Heart left ventricle (tissue), 16 donors: ENCODE measurements at regions of chr1 and their contacts with region 1.

Region 1: DNA sequence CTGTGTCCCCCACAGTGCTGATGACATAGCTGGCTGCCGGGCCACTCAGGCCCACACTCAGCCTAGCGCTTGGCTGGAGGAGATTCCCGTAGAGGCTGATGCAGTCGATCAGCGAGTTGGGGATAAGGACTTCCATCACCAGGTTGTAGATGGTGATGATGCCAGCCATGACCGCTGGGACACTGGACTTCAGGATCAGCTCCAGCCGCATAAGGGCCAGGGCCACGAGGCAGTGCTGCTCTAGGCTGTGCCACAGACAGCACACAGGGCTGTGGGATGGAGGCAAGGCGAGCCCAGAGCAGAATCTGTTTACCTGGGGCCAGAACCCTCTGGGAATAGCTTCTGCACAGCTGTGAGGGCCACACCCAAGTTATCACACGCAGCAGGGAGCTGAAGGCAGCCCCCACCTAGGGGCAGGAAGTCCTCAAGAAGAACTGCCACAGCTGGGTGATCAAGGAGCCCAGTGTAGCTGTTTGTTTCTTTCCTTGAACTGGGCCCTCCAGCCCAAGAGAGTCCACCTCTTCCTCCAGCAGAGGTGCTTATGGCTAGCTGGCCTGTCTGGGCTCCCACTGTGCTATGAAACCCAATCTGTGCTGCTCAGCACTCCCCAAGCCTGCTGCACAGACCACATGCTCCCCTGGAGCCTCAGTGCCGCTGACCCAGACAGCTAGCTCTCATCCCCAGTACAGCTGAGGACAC is 6.2 kb downstream of the SLC2A1 start:
- DNase-seq: no peak
- ATAC-seq: no peak
- H3K4me3 ChIP-seq: peak overlapping the region in 1 of 12 donors; percentile 9
- H3K27ac ChIP-seq: peak overlapping the region in 7 of 12 donors; percentile 9 to 78 (median 42)
- H3K4me1 ChIP-seq: peaks cover 0 to 78% (median 29%) of the 10 kb centered on the region in 12 donors
- H3K27me3 ChIP-seq: no peaks in the 10 kb centered on the region
- CTCF ChIP-seq: no peak
- POLR2A ChIP-seq: no peak

Region 2: GRCh38 chr1:42929434-42930195 is 22.8 kb before region 1 on chr1:
- intact Hi-C with region 1: loop called in 2 of 10 experiments (anchors 2 to 5 kb)
- DNase-seq: no peak
- ATAC-seq: no peak
- H3K4me3 ChIP-seq: no peak overlapping the region
- H3K27ac ChIP-seq: no peak overlapping the region
- H3K4me1 ChIP-seq: peaks cover 0 to 46% (median 6%) of the 10 kb centered on the region in 12 donors
- H3K27me3 ChIP-seq: no peaks in the 10 kb centered on the region
- CTCF ChIP-seq: no peak
- POLR2A ChIP-seq: no peak

Region 3: GRCh38 chr1:43035821-43036741 is 83.6 kb after region 1 on chr1:
- intact Hi-C with region 1: no loop called
- DNase-seq: no peak
- ATAC-seq: no peak
- H3K4me3 ChIP-seq: no peak overlapping the region
- H3K27ac ChIP-seq: no peak overlapping the region
- H3K4me1 ChIP-seq: peaks cover 0 to 9% (median 0%) of the 10 kb centered on the region in 12 donors
- H3K27me3 ChIP-seq: no peaks in the 10 kb centered on the region
- CTCF ChIP-seq: no peak
- POLR2A ChIP-seq: no peak